RWPE1 (cell line): ENCODE measurements at regions of chr12 and their contacts with region 1.

Region 1: DNA sequence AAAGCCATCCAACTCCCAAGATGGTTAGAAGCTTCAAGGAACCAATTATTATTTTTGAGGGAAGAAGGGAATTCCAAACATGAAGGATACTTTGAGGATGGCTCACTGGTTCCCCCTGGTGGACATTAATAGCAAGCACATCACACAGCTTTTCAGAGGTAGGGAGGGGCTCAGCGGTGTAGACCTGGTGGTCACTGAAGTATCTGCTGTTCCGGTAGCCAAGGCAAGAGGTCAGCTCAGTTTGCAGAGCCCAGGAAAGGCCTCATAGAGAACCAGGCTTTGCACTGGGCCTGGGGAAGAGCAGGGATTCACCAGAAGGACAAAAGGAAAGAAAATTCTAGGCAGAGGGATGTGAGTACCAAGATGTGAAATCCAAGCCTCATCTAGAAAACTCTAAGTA is 118.7 kb downstream of the KSR2 start:
- DNase-seq: peak; percentile 62
- H3K27ac ChIP-seq: no peak overlapping the region
- CTCF ChIP-seq: peak; percentile 85

Region 2: GRCh38 chr12:117367011-117367638 is 482.9 kb before region 1 on chr12:
- CTCF ChIA-PET with region 1: interaction called, 10 read pairs
- POLR2A ChIA-PET with region 1: no interaction called
- DNase-seq: peak; percentile 76
- H3K27ac ChIP-seq: no peak overlapping the region
- CTCF ChIP-seq: peak; percentile 91

Region 3: GRCh38 chr12:117836999-117837736 is 12.9 kb before region 1 on chr12:
- CTCF ChIA-PET with region 1: interaction called, 11 read pairs
- POLR2A ChIA-PET with region 1: no interaction called
- DNase-seq: peak; percentile 67
- H3K27ac ChIP-seq: no peak overlapping the region
- CTCF ChIP-seq: peak; percentile 95

Region 4: GRCh38 chr12:119828300-119828699 is 1978.3 kb after region 1 on chr12:
- CTCF ChIA-PET with region 1: interaction called, 10 read pairs
- POLR2A ChIA-PET with region 1: no interaction called
- DNase-seq: no peak
- H3K27ac ChIP-seq: no peak overlapping the region
- CTCF ChIP-seq: no peak